ENCODE measurements at regions of chr18 and their contacts with region 1.

Region 1: GRCh38 chr18:29892960-29893558 is 1149.5 kb downstream of the DSC3 start:
- DNase-seq: peak; percentile 20
- H3K4me3 ChIP-seq: no peak overlapping the region
- H3K27ac ChIP-seq: no peak overlapping the region
- H3K4me1 ChIP-seq: no peaks in the 10 kb centered on the region
- H3K27me3 ChIP-seq: no peaks in the 10 kb centered on the region

Region 2: DNA sequence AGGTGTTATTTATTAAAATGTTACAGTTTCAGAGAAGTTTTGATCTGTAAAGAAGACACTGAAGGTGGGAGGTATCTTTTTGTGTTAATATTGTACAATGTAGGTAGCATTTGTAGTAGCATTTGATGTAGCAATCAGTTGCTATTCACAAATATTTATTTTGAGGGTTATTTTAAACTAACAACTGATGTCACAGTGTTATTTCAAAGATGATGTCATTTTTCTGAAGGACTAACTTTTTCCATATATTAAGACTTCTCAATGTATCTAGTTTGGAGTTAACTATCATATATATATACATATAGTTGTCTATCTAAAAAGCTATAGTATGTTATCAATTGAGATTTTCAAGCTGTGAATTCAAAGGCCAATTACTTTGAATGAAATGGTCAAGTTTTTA is 146.1 kb after region 1 on chr18:
- in situ Hi-C with region 1: no loop called
- DNase-seq: no peak
- H3K4me3 ChIP-seq: no peak overlapping the region
- H3K27ac ChIP-seq: no peak overlapping the region
- H3K4me1 ChIP-seq: no peaks in the 10 kb centered on the region
- H3K27me3 ChIP-seq: no peaks in the 10 kb centered on the region

Region 3: DNA sequence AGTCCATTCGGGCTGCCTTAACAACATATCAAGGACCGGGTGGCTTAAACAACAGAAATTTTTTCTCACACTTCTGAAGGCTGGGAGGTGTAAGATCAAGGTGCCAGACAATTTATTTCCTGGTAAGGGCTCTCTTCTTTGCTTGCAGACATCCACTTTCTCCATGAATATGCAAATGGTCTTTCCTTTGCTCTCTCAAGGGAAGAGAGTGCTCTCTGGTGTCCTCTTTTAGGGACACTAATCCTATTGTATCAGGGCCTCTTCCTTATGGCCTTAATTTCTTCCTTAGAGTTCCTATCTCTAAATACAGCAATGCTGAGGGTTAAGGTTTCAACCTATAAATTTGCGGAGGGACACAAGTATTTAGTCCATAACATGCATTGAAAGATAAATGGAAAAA is 378.7 kb after region 1 on chr18:
- in situ Hi-C with region 1: loop called (anchors 10 kb)
- DNase-seq: no peak
- H3K4me3 ChIP-seq: no peak overlapping the region
- H3K27ac ChIP-seq: no peak overlapping the region
- H3K4me1 ChIP-seq: no peaks in the 10 kb centered on the region
- H3K27me3 ChIP-seq: no peaks in the 10 kb centered on the region

Measured in GM23248 (cell line).